Right ventricle myocardium inferior (tissue), 1 donor: ENCODE measurements at regions of chr11 and their contacts with region 1.

Region 1: DNA sequence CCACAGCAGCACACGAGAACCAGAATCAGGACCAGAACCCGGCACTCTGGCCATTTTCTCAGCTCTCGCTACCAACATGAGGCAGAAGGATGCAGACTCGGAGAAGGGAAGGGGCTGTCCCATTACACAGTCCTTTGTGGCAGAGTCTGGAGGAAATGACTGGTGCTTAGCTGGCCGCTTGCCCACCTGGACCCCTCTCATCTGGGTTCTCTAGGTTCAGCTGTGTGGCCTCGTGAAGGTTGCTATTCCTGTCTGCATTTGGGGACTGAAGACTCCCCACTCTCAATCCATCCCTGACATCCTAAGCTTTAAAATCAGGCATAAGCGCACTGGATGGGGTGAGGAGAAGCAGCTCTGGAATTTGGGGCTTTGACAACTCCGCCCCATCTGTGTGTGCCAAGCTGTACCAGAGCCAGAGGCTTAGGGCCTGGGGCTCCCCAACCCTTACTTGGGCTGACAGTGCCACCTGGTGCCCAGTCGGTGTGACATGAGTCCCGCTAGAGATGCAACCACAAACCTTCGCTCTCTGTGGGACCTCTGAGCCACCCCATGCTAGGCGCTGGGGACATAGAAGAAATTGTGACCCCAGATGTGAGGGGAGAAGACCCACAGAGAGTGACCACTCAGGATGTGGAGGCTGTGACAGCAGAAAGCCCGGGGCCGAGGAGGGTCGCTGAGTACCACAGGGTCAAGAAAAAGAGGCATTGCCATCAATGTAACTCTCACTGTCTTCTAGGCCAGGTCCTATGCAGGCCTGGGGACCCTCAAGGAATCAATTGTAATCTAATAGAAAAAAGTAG is 35.9 kb upstream of the FCHSD2 start:
- DNase-seq: peak; percentile 91
- ATAC-seq: peak; percentile 69

Region 2: DNA sequence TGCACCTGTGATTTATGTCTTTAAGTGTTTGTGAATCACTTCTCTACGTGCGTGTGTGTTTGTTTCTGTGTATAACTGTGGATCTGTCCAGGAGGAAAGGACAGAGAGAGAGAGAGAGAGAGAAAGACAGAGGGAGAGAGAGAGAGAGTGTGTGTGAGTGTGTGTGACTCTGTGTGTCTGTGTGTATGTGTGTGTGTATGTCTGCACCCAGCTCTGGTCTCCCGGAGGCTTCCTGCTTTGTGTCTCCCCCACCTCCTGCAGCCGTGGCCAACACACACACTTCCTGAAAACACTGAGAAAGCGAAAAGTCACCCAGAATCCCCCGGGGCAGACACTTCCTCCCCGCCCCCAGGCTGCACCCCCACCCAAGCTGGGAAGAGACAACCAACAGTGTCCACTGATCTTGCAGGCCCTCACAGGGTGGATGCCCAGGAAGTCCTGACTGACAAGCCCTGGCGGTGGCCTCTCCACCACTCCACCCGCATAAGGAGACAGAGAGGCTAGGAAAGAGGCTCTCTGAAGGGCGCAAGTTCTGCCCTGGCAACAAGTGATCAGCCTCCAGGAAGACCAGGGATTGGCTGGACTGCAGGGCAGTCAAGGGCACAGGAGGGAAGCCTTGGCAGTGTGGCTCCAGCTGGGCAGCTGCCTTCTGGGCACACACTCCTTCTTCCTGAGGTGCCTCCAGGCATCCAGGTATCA is 455.8 kb before region 1 on chr11:
- intact Hi-C with region 1: loop called (anchors 5 kb)
- DNase-seq: peak; percentile 94
- ATAC-seq: peak; percentile 81

Region 3: GRCh38 chr11:72924568-72925190 is 253.3 kb before region 1 on chr11:
- intact Hi-C with region 1: loop called (anchors 2 kb)
- DNase-seq: no peak
- ATAC-seq: peak; percentile 52

Region 4: GRCh38 chr11:73141848-73142286 is 36.1 kb before region 1 on chr11:
- intact Hi-C with region 1: loop called (anchors 2 kb)
- DNase-seq: peak; percentile 91
- ATAC-seq: peak; percentile 48